Right ventricle myocardium inferior (tissue), 1 donor: ENCODE measurements at regions of chr16 and their contacts with region 1.

Region 1: DNA sequence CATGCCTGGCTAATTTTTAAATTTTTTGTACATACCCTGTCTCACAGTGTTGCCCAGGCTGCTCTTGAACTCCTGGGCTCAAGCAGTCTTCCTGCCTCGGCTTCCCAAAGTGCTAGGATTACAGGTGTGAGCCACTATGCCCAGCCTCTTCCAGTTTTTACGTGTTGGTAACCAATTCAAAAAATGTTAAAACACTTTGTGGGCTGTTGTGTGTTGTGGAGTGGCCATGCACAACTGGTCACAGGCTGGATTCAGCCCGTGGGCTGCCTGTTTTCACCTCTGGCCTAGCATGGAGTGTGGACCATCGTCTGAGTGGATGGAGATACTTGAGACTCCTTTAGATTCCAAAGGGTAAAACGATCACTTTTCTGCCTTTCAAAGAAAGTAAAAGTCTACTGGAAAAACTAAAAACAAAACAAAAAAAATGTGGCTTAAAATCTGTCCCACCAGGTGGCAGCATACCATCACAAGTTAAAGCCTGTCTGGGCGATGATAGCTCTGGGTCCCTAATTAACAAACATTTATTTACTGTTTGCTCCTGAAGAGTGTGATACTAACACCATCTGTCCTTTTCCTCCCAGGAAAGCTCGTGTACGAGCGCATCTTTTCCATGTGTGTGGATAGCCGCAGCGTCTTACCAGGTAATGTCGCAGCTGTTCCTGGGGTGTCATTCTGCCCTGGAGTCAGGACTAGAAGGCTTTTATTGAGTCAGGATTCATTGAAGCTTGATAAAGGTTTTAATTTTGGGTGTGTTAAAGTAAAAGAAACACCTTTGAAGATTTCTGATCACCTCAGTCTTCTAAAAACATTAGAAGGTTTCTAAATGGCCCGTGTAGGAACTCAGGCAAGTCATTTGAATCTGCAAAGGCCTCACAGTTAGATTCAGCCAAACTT is 45.8 kb downstream of the VPS35L start:
- DNase-seq: no peak
- ATAC-seq: no peak

Region 2: DNA sequence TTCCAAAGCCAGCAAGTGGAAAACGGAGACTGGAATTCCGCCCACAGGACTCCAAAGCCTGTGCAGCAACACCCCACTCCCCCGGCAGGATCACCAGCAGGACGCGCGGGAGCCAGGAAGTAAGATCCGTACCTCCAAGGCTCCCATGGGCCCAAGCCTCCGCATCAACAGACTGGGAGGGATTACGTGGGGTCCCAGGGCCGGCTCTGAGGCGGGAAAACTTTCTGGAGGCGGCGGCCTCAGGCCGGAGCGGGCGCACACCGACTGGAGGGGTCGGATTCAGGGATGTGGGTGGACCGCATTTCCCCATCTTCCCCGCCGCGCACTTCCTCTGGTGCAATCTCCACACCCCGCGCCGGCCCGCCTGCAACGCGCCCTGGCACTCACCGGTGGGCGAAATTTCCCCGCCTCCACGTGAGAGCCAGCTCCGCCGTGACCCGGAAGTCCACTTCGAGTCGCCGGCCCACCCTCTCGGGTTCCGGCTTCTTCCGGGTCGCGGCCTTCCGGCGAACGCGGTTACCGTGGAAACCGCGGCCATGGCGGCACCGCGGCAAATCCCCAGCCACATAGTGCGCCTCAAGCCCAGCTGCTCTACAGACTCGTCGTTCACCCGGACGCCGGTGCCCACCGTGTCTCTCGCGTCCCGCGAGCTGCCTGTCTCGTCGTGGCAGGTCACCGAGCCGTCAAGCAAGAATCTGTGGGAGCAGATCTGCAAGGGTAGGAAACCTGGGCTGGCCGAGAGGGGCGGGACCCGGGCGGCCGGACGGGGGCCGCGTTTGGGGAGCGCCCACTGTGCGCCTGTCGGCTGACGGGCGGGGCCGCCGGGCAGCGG is 116.7 kb after region 1 on chr16 and contains the starts of genes IQCK and KNOP1:
- intact Hi-C with region 1: loop called (anchors 5 kb)
- DNase-seq: peak; percentile 95
- ATAC-seq: peak; percentile 95
- total RNA-seq, gene IQCK: 5.2 TPM
- total RNA-seq, gene KNOP1: 8.4 TPM